ENCODE measurements at regions of chr18 and their contacts with region 1.

Region 1: GRCh38 chr18:50662177-50662576 is 102.3 kb downstream of the MAPK4 start:
- DNase-seq: no peak
- H3K4me3 ChIP-seq: no peak overlapping the region
- H3K27ac ChIP-seq: no peak overlapping the region
- H3K4me1 ChIP-seq: peaks cover 0 to 50% (median 9%) of the 10 kb centered on the region in 4 donors
- H3K27me3 ChIP-seq: no peaks in the 10 kb centered on the region
- CTCF ChIP-seq: no peak

Region 2: DNA sequence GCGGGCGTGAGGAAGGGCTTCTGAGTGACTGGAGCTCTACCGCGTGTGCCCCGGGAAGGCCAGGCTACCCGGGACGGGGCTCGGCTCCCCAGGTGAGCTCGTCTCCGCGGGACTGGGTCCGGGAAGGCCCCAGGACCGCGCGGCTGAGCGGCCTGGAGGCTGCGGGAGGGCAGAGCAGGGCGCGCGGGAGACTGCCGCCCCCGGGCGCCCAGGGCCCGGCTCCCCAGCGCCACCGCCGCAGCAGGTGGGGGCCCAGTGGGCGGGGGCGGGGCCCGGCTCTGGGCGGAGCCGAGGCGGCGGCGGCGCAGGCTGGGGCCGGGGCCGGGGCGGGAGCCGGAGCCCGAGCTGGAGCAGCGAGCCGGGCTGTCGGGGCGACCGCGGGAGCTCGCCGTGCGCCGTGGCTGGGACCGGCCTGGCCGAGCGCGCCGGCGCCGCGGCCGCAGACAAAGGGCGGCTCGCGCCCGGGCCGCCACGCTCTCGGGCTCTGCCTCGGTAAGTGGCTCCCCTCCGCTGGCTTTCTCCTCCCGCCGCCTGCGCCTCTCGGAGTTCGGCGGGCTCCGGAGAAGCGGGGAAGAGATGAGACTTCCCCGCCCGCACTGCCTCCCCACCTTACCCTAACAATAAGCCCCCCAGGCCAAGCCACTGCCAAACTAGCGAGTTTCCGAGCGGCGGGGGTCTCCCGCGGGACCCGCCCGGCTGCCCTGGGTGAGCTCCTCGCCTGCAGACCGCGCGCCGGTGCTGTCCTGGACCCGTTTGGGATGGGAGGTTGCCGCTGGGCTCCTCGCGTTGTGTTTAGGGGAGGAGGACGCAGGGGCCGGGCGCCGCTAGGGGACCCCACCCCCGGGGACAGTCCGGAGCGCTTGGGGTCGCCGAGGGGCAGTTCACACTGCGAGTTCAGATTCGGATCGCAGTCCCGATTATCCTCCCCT is 102.2 kb before region 1 on chr18 and contains the start of gene MAPK4:
- intact Hi-C with region 1: loop called (anchors 10 kb)
- DNase-seq: peak in 1 of 2 donors; percentile 80
- H3K4me3 ChIP-seq: peak within 1 kb of the TSS; percentile 78 to 83
- H3K27ac ChIP-seq: peak within 1 kb of the TSS; percentile 90 to 91
- H3K4me1 ChIP-seq: peaks cover 0 to 33% (median 13%) of the 10 kb centered on the region in 4 donors
- H3K27me3 ChIP-seq: no peaks in the 10 kb centered on the region
- CTCF ChIP-seq: no peak

Region 3: GRCh38 chr18:50602525-50602924 is 59.7 kb before region 1 on chr18:
- intact Hi-C with region 1: loop called (anchors 10 kb)
- DNase-seq: no peak
- H3K4me3 ChIP-seq: no peak overlapping the region
- H3K27ac ChIP-seq: no peak overlapping the region
- H3K4me1 ChIP-seq: peaks cover 0 to 8% (median 0%) of the 10 kb centered on the region in 4 donors
- H3K27me3 ChIP-seq: no peaks in the 10 kb centered on the region
- CTCF ChIP-seq: no peak

Region 4: DNA sequence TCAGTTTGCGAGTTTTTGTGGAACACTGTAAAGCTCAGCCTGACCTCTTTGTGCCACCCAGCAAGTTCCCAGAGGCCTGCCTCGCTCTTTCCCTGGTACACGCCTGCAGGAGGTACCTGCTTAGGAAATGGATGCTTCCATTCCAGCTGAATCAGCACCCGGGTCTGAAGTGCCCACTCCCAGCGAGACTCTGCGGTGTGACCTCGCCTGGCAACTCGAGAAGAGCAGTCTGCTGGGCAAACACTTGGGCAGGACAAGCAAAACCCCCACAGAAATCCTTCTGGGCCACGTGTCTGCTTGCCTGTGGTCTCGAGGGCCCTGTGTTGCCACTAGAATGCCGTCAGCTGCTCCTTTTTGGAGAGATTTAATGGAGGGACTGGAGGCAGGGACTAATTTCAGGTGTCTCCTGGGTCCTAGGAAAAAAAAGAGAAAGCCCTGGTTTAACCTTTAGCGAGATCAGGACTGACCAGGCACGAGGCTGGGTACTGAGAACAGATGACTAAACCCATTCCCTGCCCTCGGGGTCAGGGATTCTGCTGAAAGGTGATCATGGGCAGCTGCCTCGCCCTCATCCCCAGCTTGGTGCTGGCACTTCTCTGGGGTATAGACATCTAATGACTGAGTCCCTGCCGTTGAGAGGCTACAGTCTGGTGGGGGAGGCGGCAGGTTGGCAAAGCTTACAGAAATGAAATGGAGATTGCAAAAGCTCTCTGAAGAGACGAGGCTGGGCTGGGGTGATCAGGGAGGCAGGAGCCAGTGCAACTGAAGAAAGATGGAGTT is 25.5 kb after region 1 on chr18:
- intact Hi-C with region 1: no loop called
- DNase-seq: peak in 1 of 2 donors; percentile 52
- H3K4me3 ChIP-seq: no peak overlapping the region
- H3K27ac ChIP-seq: no peak overlapping the region
- H3K4me1 ChIP-seq: no peaks in the 10 kb centered on the region
- H3K27me3 ChIP-seq: no peaks in the 10 kb centered on the region
- CTCF ChIP-seq: no peak

Region 5: GRCh38 chr18:50707855-50708469 is 45.8 kb after region 1 on chr18:
- intact Hi-C with region 1: no loop called
- DNase-seq: peak in 1 of 2 donors; percentile 39
- H3K4me3 ChIP-seq: no peak overlapping the region
- H3K27ac ChIP-seq: peak overlapping the region; percentile 57 to 61
- H3K4me1 ChIP-seq: peaks cover 0 to 19% (median 3%) of the 10 kb centered on the region in 4 donors
- H3K27me3 ChIP-seq: no peaks in the 10 kb centered on the region
- CTCF ChIP-seq: no peak

Region 6: DNA sequence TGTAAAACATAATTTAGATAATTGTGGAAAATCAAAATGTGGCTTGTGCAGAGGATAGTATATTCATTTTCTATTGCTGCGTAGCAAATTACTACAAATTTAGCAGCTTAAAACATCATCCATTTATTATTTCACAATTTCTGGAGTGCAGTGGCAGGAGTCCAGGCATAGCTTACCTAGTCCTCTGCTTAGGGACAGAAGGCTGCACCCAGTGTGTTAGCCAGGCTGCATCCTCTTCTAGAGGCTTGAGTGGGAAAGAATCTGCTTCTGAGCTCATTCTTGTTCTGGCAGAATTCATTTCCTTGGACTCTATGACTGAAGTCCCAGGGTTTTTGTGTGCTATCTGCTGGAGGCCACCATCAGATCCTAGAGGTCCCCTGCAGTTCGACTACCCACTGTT is 118.0 kb after region 1 on chr18:
- intact Hi-C with region 1: loop called (anchors 5 kb)
- DNase-seq: no peak
- H3K4me3 ChIP-seq: no peak overlapping the region
- H3K27ac ChIP-seq: no peak overlapping the region
- H3K4me1 ChIP-seq: no peaks in the 10 kb centered on the region
- H3K27me3 ChIP-seq: no peaks in the 10 kb centered on the region
- CTCF ChIP-seq: no peak